HepG2 (cell line): ENCODE measurements at regions of chr11 and their contacts with region 1.

Region 1: GRCh38 chr11:71120490-71120896 is 131.9 kb downstream of the SHANK2 start:
- DNase-seq: peak; percentile 38
- ATAC-seq: peak; percentile 79
- H3K4me3 ChIP-seq: no peak overlapping the region
- H3K27ac ChIP-seq: no peak overlapping the region
- H3K4me1 ChIP-seq: no peaks in the 10 kb centered on the region
- H3K27me3 ChIP-seq: no peaks in the 10 kb centered on the region
- CTCF ChIP-seq: peak; percentile 73
- EP300 ChIP-seq: no peak
- POLR2A ChIP-seq: no peak
- RAD21 ChIP-seq: peak; percentile 54

Region 2: DNA sequence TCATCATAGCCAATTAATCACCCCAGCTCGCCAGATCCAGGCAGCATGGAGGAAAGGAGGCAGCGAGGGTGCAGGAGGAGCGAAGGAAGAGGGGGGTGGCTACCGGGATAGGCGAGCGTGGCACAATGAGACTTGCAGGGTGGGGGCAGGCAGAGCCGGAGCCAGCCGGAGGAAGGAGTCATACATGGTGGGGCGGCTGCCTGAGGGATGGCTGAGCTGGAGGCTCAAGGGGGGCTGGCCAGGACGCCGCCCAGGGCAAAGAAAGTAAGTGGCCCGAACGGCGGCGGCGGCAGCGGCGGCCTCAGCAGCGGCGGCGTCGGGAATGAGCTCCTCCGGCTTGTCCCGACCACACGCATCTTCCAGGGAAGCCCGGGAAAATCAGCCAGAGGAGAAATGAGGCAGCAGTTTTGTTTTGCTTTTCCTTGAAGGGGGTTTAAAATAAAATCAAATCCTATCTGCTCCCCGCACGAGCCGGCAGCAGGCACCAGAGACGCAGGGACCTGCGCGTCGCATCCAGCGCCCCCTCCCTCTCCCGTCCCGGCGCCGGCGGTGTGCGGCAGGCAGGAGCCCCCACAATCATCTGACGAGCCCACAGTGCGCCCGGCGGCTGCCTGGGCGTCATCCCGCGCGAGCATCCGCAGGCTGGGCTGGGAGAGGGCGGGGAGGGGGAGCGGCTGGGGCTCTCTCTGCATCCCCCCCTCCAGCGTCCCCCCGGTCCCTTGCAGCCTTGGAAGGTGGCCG is 458.6 kb before region 1 on chr11:
- CTCF ChIA-PET with region 1: no interaction called
- POLR2A ChIA-PET with region 1: no interaction called
- in situ Hi-C with region 1: no loop called
- intact Hi-C with region 1: no loop called
- DNase-seq: no peak
- ATAC-seq: no peak
- H3K4me3 ChIP-seq: no peak overlapping the region
- H3K27ac ChIP-seq: no peak overlapping the region
- H3K4me1 ChIP-seq: peaks cover 22% of the 10 kb centered on the region
- H3K27me3 ChIP-seq: no peaks in the 10 kb centered on the region
- CTCF ChIP-seq: no peak
- EP300 ChIP-seq: no peak
- POLR2A ChIP-seq: no peak
- RAD21 ChIP-seq: no peak

Region 3: GRCh38 chr11:71060391-71060791 is 60.1 kb before region 1 on chr11:
- CTCF ChIA-PET with region 1: no interaction called
- POLR2A ChIA-PET with region 1: no interaction called
- in situ Hi-C with region 1: no loop called
- intact Hi-C with region 1: no loop called
- DNase-seq: no peak
- ATAC-seq: no peak
- H3K4me3 ChIP-seq: no peak overlapping the region
- H3K27ac ChIP-seq: no peak overlapping the region
- H3K4me1 ChIP-seq: no peaks in the 10 kb centered on the region
- H3K27me3 ChIP-seq: no peaks in the 10 kb centered on the region
- CTCF ChIP-seq: no peak
- EP300 ChIP-seq: no peak
- POLR2A ChIP-seq: no peak
- RAD21 ChIP-seq: no peak

Region 4: GRCh38 chr11:71329165-71329510 is 208.6 kb after region 1 on chr11:
- CTCF ChIA-PET with region 1: interaction called, 4 read pairs
- POLR2A ChIA-PET with region 1: no interaction called
- in situ Hi-C with region 1: no loop called
- intact Hi-C with region 1: loop called (anchors 1 kb)
- DNase-seq: no peak
- ATAC-seq: no peak
- H3K4me3 ChIP-seq: no peak overlapping the region
- H3K27ac ChIP-seq: no peak overlapping the region
- H3K4me1 ChIP-seq: peaks cover 19% of the 10 kb centered on the region
- H3K27me3 ChIP-seq: peaks cover 1 to 53% of the 10 kb centered on the region in 2 experiments
- CTCF ChIP-seq: no peak
- EP300 ChIP-seq: no peak
- POLR2A ChIP-seq: no peak
- RAD21 ChIP-seq: no peak

Region 5: GRCh38 chr11:71420455-71421241 is 300.2 kb after region 1 on chr11:
- CTCF ChIA-PET with region 1: interaction called, 10 read pairs
- POLR2A ChIA-PET with region 1: no interaction called
- in situ Hi-C with region 1: no loop called
- intact Hi-C with region 1: no loop called
- DNase-seq: peak; percentile 48
- ATAC-seq: peak; percentile 81
- H3K4me3 ChIP-seq: no peak overlapping the region
- H3K27ac ChIP-seq: no peak overlapping the region
- H3K4me1 ChIP-seq: peaks cover 9% of the 10 kb centered on the region; the same call in 1 of the 2 replicates
- H3K27me3 ChIP-seq: peaks cover 3 to 28% of the 10 kb centered on the region in 2 experiments; a peak in 3 of 5 replicates
- CTCF ChIP-seq: peak; percentile 88
- EP300 ChIP-seq: no peak
- POLR2A ChIP-seq: no peak
- RAD21 ChIP-seq: peak; percentile 70